PC-3 (cell line): ENCODE measurements at regions of chr12 and their contacts with region 1.

Region 1: DNA sequence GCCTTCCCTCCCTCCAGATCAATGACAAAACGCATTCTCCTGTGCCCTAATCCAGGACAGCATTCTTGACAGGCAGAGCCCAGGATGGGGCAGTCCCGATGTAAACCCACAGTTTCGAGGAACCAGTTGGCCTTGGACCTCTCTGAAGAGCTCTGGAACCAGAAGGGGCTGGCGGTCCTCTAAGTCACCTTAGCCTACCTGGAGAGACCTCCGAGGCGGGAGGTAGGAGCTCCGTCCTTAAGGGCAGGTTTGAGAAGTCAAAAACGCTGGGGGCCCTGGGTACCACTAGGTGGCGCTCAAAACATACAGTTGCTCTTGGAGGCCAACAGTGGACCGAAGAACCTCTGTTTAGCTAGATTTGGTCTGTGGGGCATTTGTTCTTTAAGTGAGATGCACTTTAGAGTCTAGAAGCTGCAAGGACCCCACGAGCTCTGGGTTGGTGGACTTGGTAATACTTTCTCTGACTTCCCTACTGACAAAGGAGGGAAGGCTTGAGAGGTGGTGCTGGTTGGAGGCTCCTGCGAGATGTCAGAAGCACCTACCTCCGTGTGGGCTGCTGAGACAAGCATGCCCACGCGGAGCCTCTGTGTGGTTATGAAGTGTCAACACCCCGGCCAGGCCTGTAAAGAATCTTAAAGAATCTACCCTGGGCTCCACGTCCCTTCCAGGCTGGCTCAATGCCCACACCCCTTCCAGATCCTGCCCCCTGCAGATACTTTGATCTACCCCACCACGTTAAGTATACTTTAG is 74.8 kb upstream of the CHST11 start:
- DNase-seq: peak; percentile 96
- ATAC-seq: peak; percentile 75
- H3K4me3 ChIP-seq: peak overlapping the region; percentile 46; the same call in 1 of the 2 replicates
- H3K27ac ChIP-seq: no peak overlapping the region
- H3K4me1 ChIP-seq: peaks cover 16% of the 10 kb centered on the region
- H3K27me3 ChIP-seq: no peaks in the 10 kb centered on the region
- CTCF ChIP-seq: peak; percentile 99

Region 2: GRCh38 chr12:104329707-104330532 is 52.0 kb before region 1 on chr12:
- CTCF ChIA-PET with region 1: no interaction called
- POLR2A ChIA-PET with region 1: no interaction called
- intact Hi-C with region 1: no loop called
- DNase-seq: no peak
- ATAC-seq: peak; percentile 27
- H3K4me3 ChIP-seq: no peak overlapping the region
- H3K27ac ChIP-seq: no peak overlapping the region
- H3K4me1 ChIP-seq: no peaks in the 10 kb centered on the region
- H3K27me3 ChIP-seq: no peaks in the 10 kb centered on the region
- CTCF ChIP-seq: no peak

Region 3: GRCh38 chr12:104456417-104456949 is 74.6 kb after region 1 on chr12 and contains the start of gene CHST11:
- CTCF ChIA-PET with region 1: interaction called, 4 read pairs
- POLR2A ChIA-PET with region 1: interaction called, 12 read pairs
- intact Hi-C with region 1: loop called (anchors 1 kb)
- DNase-seq: peak; percentile 85
- ATAC-seq: peak; percentile 80
- H3K4me3 ChIP-seq: peak within 1 kb of the TSS; percentile 94
- H3K27ac ChIP-seq: no peak within 1 kb of the TSS
- H3K4me1 ChIP-seq: peaks cover 39% of the 10 kb centered on the region
- H3K27me3 ChIP-seq: no peaks in the 10 kb centered on the region
- CTCF ChIP-seq: no peak; the same call in 1 of the 2 replicates
- total RNA-seq, gene CHST11: 53.5 and 56.7 TPM in 2 replicates

Region 4: DNA sequence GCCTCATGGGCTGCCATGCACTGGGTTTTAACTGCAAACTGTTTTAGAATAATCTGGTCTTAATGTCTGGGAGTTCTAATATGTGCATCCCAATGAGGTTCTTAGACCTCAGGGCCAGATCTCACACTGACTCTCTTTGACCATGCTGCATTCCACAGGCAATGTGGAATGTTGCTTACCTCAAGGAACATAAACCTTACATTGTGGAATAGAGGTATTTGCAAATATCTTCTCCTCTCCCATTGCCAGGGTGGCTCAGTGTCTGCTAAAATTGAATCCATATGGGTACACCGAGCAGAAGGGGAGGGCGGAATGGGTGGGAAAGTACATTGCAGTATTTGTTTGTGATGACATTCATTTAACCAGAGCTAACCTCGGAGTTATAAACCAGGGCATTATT is 153.5 kb after region 1 on chr12:
- CTCF ChIA-PET with region 1: interaction called, 10 read pairs
- POLR2A ChIA-PET with region 1: no interaction called
- intact Hi-C with region 1: no loop called
- DNase-seq: no peak
- ATAC-seq: no peak
- H3K4me3 ChIP-seq: no peak overlapping the region
- H3K27ac ChIP-seq: no peak overlapping the region
- H3K4me1 ChIP-seq: no peaks in the 10 kb centered on the region
- H3K27me3 ChIP-seq: no peaks in the 10 kb centered on the region
- CTCF ChIP-seq: no peak

Region 5: DNA sequence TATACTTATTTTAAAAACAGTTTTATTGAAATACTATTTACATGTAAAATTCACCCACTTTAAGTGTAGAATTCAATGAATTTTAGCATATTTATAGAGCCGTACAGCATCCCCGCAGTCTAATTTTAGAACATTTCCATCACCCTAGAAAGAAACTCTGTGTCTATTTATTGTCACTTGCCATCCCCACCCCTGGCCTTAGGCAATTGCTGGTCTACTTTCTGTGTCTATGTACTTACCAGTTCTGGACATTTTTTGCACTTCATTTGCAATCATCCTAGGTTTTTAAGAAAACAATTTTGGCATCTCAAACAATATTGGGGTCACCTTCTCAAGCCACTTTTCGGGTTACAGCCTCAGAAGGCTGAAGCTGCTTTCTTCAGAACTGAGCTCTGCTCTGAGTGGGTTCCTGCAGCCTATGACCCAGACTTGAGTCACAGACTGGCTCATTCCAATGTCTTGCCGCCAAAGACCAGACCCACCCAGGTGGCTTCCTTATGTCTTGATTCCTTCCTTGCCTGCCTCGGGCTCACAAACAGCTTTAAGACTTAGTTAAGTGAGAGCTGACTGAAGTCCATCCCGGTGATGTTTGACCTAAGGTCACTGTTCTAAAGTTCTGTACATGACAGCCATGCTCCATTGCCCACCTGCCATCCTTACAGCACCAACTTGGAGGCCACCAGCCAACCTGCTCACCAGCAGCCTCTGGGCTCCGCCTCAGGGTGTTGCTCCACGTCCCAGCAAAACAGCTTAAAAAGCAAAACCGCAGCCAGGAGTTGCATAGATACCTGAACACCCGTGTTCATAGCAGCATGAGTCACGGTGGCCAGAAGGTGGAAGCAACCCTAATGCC is 206.4 kb after region 1 on chr12:
- CTCF ChIA-PET with region 1: interaction called, 8 read pairs
- POLR2A ChIA-PET with region 1: no interaction called
- intact Hi-C with region 1: loop called (anchors 5 kb)
- DNase-seq: peak; percentile 98
- ATAC-seq: peak; percentile 92
- H3K4me3 ChIP-seq: peak overlapping the region; percentile 59
- H3K27ac ChIP-seq: peak overlapping the region; percentile 85
- H3K4me1 ChIP-seq: peaks cover 51% of the 10 kb centered on the region
- H3K27me3 ChIP-seq: no peaks in the 10 kb centered on the region
- CTCF ChIP-seq: no peak

Region 6: DNA sequence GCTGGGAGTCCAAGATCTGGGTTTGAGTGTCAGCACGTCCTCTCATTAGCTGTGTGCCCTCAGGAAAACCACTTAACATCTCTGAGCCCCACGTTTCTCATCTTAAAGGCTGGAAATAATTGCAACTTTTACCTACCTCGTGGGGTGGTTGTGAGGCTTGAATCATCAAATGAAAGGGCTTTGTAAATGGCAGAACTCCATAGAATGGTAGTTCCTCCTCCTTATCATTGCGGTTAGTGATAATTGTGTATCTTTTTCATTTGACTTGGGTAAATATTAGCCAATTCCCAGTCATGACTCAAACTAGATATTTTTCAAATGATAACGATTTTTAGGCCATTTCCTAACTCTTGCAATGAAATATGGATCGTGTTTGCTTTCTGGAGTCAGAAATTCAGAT is 280.3 kb after region 1 on chr12:
- CTCF ChIA-PET with region 1: no interaction called
- POLR2A ChIA-PET with region 1: no interaction called
- intact Hi-C with region 1: loop called (anchors 5 kb)
- DNase-seq: peak; percentile 78
- ATAC-seq: peak; percentile 66
- H3K4me3 ChIP-seq: no peak overlapping the region
- H3K27ac ChIP-seq: 0 out of 2 replicates have a peak overlapping the region, but pooled peaks have one; percentile 3
- H3K4me1 ChIP-seq: peaks cover 23% of the 10 kb centered on the region
- H3K27me3 ChIP-seq: no peaks in the 10 kb centered on the region
- CTCF ChIP-seq: no peak

Region 7: GRCh38 chr12:104825408-104825807 is 443.5 kb after region 1 on chr12:
- CTCF ChIA-PET with region 1: no interaction called
- POLR2A ChIA-PET with region 1: no interaction called
- intact Hi-C with region 1: loop called (anchors 1 kb)
- DNase-seq: peak; percentile 70
- ATAC-seq: peak; percentile 42; the same call in 1 of the 2 replicates
- H3K4me3 ChIP-seq: no peak overlapping the region
- H3K27ac ChIP-seq: no peak overlapping the region
- H3K4me1 ChIP-seq: no peaks in the 10 kb centered on the region
- H3K27me3 ChIP-seq: no peaks in the 10 kb centered on the region
- CTCF ChIP-seq: peak; percentile 89

Region 8: DNA sequence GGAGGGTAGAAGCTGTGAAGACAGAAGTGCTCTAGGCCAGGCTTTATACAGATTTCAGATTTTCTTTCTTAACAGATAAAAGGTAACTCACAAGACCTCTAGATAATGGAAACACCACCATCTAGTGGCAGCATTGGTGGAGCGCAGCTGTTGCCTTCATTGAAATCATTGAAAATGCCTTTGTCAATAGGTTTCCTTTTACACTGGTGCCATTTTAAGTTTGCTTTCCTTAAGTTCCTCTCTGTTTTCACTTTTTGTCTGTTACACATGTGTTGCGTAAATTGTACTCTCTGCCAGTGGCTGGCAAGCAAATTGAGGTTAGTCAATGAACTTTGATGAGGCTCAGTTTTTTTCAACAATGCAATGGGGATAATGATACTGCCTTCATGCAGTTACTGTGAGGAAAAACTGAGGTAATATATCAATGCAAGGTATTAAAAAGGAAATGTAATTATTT is 671.2 kb after region 1 on chr12:
- CTCF ChIA-PET with region 1: interaction called, 3 read pairs
- POLR2A ChIA-PET with region 1: no interaction called
- intact Hi-C with region 1: loop called (anchors 2 kb)
- DNase-seq: peak; percentile 97
- ATAC-seq: peak; percentile 95
- H3K4me3 ChIP-seq: no peak overlapping the region
- H3K27ac ChIP-seq: no peak overlapping the region
- H3K4me1 ChIP-seq: no peaks in the 10 kb centered on the region; the same call in 1 of the 2 replicates
- H3K27me3 ChIP-seq: no peaks in the 10 kb centered on the region
- CTCF ChIP-seq: peak; percentile 99